HepG2 (cell line): ENCODE measurements at regions of chr5 and their contacts with region 1.

Region 1: GRCh38 chr5:27986061-27986460 is 947.7 kb upstream of the CDH9 start:
- DNase-seq: no peak
- ATAC-seq: no peak
- H3K4me3 ChIP-seq: no peak overlapping the region
- H3K27ac ChIP-seq: no peak overlapping the region
- H3K4me1 ChIP-seq: no peaks in the 10 kb centered on the region
- H3K27me3 ChIP-seq: no peaks in the 10 kb centered on the region
- CTCF ChIP-seq: no peak
- EP300 ChIP-seq: no peak
- POLR2A ChIP-seq: no peak
- RAD21 ChIP-seq: no peak

Region 2: DNA sequence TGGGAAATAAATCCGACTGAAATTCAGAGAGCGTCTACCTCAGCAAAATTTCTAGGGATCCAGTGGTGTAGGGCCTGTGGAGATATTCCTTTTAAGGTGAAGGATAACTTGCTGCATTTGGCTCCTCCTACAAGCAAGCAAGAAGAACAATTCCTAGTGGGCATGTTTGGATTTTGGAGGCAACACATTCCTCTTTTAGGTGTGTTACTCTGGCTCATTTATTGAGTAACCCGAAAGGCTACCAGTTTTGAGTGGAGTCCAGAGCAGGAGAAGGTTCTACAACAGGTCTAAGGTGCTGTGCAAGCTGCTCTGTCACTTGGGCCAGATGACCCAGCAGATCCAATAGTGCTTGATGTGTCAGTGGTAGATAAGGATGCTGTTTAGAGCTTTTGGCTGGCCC is 85.3 kb before region 1 on chr5:
- CTCF ChIA-PET with region 1: no interaction called
- POLR2A ChIA-PET with region 1: no interaction called
- in situ Hi-C with region 1: no loop called
- intact Hi-C with region 1: no loop called
- DNase-seq: no peak
- ATAC-seq: no peak
- H3K4me3 ChIP-seq: no peak overlapping the region
- H3K27ac ChIP-seq: no peak overlapping the region
- H3K4me1 ChIP-seq: no peaks in the 10 kb centered on the region
- H3K27me3 ChIP-seq: no peaks in the 10 kb centered on the region; a peak in 1 of 5 replicates
- CTCF ChIP-seq: no peak
- EP300 ChIP-seq: no peak
- POLR2A ChIP-seq: no peak
- RAD21 ChIP-seq: no peak

Region 3: DNA sequence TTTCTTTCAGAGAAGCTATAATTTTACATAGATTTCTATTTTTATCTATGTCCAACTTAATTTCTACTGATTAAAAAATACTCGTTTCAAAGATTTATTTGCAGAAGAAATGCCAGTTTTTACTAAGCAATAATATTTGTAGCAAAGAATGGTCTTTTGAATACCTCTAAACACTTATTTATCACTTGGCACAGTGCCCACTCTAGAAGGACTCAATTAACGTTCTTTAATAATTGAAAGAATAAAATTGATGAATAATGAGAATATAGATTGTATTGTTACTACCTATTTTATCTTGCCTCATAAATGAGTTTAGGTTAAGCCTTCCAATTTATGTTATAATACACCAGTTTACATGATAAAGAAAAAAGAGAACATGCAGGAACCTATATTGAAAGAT is 58.0 kb before region 1 on chr5:
- CTCF ChIA-PET with region 1: no interaction called
- POLR2A ChIA-PET with region 1: no interaction called
- in situ Hi-C with region 1: no loop called
- intact Hi-C with region 1: loop called (anchors 2 kb)
- DNase-seq: no peak
- ATAC-seq: no peak
- H3K4me3 ChIP-seq: no peak overlapping the region
- H3K27ac ChIP-seq: no peak overlapping the region
- H3K4me1 ChIP-seq: no peaks in the 10 kb centered on the region
- H3K27me3 ChIP-seq: no peaks in the 10 kb centered on the region
- CTCF ChIP-seq: no peak
- EP300 ChIP-seq: no peak
- POLR2A ChIP-seq: no peak
- RAD21 ChIP-seq: no peak